ENCODE measurements at regions of chr16 and their contacts with region 1.

Region 1: GRCh38 chr16:56317998-56318826 is 107.1 kb downstream of the AMFR start:
- DNase-seq: peak; percentile 49 to 95
- H3K4me3 ChIP-seq: peak overlapping the region in 3 of 4 experiments; percentile 31 to 55 (median 42); a peak in 4 of 8 replicates
- H3K27ac ChIP-seq: no peak overlapping the region
- H3K4me1 ChIP-seq: peaks cover 0 to 4% (median 3%) of the 10 kb centered on the region in 4 experiments; a peak in 2 of 7 replicates
- H3K27me3 ChIP-seq: peaks cover 0 to 5% (median 0%) of the 10 kb centered on the region in 4 experiments; a peak in 2 of 7 replicates
- CTCF ChIP-seq: peak; percentile 91 to 95 (median 92)
- EP300 ChIP-seq: no peak
- POLR2A ChIP-seq: peak in 1 of 2 experiments; percentile 47; a peak in 1 of 3 replicates
- RAD21 ChIP-seq: peak; percentile 97

Region 2: DNA sequence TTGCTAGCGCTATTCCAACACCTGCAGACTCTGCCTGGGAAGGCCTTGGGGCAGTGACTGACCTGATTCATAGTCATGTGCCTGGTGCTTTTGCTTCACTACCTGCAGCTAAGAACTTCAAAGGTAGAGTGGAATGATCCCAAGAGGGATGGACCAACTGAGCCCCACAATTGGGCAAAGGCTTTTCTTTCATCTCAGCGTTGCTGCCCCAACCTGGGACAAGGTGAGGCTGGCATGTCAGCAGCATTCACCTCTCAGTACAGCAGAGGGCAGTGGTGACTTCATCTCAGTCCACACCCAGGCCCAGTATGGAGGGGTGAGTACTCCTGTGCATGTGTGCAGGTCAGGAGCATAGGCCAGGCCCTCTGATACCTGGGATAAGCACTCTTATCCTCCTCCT is 276.5 kb before region 1 on chr16:
- CTCF ChIA-PET with region 1: interaction called, 44 read pairs
- POLR2A ChIA-PET with region 1: no interaction called
- DNase-seq: peak; percentile 31 to 67
- H3K4me3 ChIP-seq: no peak overlapping the region
- H3K27ac ChIP-seq: no peak overlapping the region
- H3K4me1 ChIP-seq: no peaks in the 10 kb centered on the region
- H3K27me3 ChIP-seq: no peaks in the 10 kb centered on the region; a peak in 2 of 7 replicates
- CTCF ChIP-seq: peak; percentile 89 to 95 (median 90)
- EP300 ChIP-seq: no peak
- POLR2A ChIP-seq: no peak
- RAD21 ChIP-seq: peak; percentile 95

Region 3: GRCh38 chr16:56246051-56246817 is 72.0 kb before region 1 on chr16:
- CTCF ChIA-PET with region 1: interaction called, 13 read pairs
- POLR2A ChIA-PET with region 1: no interaction called
- DNase-seq: peak in 1 of 2 experiments; percentile 38
- H3K4me3 ChIP-seq: no peak overlapping the region
- H3K27ac ChIP-seq: no peak overlapping the region
- H3K4me1 ChIP-seq: peaks cover 2 to 9% (median 5%) of the 10 kb centered on the region in 4 experiments; a peak in 5 of 7 replicates
- H3K27me3 ChIP-seq: no peaks in the 10 kb centered on the region; a peak in 1 of 7 replicates
- CTCF ChIP-seq: no peak
- EP300 ChIP-seq: no peak
- POLR2A ChIP-seq: no peak
- RAD21 ChIP-seq: 0 out of 4 replicates have a peak, but pooled peaks have one; percentile 8 to 10

Region 4: DNA sequence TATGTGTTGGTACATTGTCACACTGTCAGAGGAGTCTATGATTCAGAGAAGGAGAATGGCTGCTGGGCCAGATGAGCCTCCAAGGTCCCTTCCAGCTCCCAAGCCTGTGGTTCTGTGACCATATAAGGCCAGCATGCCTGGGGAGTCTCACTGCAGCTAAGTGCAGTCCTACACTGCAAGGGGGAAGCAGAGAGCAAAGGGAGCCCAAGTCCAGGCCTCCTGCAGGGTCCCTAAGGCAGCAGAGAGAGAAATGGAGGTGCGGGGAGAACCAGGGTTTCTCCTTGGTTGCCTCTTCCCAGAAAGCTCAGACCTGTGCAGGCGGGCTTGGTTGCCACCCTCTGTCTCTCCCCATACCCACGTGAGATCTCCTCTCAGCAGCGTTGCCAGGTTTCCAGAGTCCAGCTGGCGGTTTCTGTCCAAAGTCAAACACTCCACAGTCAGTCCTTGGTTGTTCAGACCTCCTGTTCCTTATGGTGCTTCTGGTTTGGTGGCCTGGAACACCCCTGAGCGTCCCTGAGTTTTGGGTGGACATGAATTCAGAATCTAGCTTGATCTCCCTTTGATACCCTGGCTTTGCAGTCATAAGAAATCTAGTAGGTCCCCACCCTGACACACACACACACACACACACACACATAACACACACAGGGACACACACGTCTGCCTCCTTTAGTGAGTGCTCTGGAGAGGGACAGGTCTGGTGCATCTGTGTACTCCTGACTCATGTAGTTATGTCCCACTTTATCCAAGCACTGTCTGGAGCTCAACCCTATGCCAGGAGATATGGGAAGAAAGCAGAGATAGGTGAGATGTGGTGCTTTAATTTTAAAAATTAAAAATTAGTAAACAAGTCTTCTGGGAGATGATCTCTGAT is 48.2 kb before region 1 on chr16:
- CTCF ChIA-PET with region 1: interaction called, 12 read pairs
- POLR2A ChIA-PET with region 1: no interaction called
- DNase-seq: peak in 1 of 2 experiments; percentile 29
- H3K4me3 ChIP-seq: no peak overlapping the region
- H3K27ac ChIP-seq: 0 out of 2 replicates have a peak overlapping the region, but pooled peaks have one; percentile 38
- H3K4me1 ChIP-seq: peaks cover 0 to 9% (median 3%) of the 10 kb centered on the region in 4 experiments; a peak in 4 of 7 replicates
- H3K27me3 ChIP-seq: no peaks in the 10 kb centered on the region
- CTCF ChIP-seq: peak; percentile 36 to 52 (median 41)
- EP300 ChIP-seq: no peak
- POLR2A ChIP-seq: no peak
- RAD21 ChIP-seq: peak; percentile 15 to 38; a peak in 3 of 4 replicates

Region 5: GRCh38 chr16:56300891-56301850 is 17.0 kb before region 1 on chr16:
- CTCF ChIA-PET with region 1: interaction called, 43 read pairs
- POLR2A ChIA-PET with region 1: interaction called, 3 read pairs
- DNase-seq: no peak
- H3K4me3 ChIP-seq: no peak overlapping the region
- H3K27ac ChIP-seq: no peak overlapping the region
- H3K4me1 ChIP-seq: peaks cover 8 to 11% (median 10%) of the 10 kb centered on the region in 4 experiments; a peak in 6 of 7 replicates
- H3K27me3 ChIP-seq: peaks cover 0 to 2% (median 0%) of the 10 kb centered on the region in 4 experiments; a peak in 1 of 7 replicates
- CTCF ChIP-seq: no peak
- EP300 ChIP-seq: no peak
- POLR2A ChIP-seq: no peak
- RAD21 ChIP-seq: no peak

Region 6: DNA sequence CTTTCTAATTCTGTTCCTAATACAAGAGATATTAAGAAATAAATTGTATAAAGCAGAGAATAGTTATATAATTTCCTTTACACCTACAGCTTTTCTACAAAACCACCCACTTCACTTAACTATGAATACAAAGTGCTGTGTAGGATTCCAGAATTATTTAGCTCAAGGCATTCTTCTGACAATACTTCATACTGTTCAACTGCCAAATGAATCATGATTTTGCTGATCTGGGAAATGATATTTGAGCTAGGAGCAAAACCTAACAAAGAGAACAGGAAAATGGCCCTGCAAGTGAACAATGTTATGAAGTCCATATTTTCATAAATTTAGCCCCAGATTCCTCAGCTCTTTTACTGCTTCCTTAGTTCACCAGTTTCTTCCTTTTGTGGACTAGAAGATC is 188.7 kb after region 1 on chr16:
- CTCF ChIA-PET with region 1: no interaction called
- POLR2A ChIA-PET with region 1: no interaction called
- DNase-seq: no peak
- H3K4me3 ChIP-seq: no peak overlapping the region
- H3K27ac ChIP-seq: no peak overlapping the region
- H3K4me1 ChIP-seq: no peaks in the 10 kb centered on the region
- H3K27me3 ChIP-seq: no peaks in the 10 kb centered on the region
- CTCF ChIP-seq: no peak
- EP300 ChIP-seq: no peak
- POLR2A ChIP-seq: no peak
- RAD21 ChIP-seq: no peak